HepG2 (cell line): ENCODE measurements at regions of chr1 and their contacts with region 1.

Region 1: DNA sequence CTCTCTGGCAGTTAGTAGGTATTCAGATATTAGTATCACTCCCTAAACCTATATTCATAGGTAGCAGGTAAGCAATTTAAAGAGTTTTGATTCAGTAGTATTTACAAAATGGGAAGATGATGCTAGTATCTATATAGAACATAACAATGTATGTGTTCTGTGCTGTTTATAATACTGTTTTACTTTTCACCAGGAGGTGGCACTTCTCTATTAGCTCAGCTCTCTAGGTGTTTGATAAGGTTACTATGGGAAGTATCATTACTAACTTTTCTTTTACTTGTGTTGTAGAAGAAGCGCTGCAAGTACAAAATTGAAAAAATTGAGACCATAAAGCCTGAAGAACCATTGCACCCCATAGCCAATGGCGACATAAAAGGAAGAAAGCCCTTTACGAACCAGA is 49.4 kb upstream of the FASLG start:
- DNase-seq: peak; percentile 6
- ATAC-seq: peak; percentile 66; the same call in 2 of the 3 replicates
- H3K4me3 ChIP-seq: no peak overlapping the region
- H3K27ac ChIP-seq: no peak overlapping the region
- H3K4me1 ChIP-seq: peaks cover 18% of the 10 kb centered on the region
- H3K27me3 ChIP-seq: no peaks in the 10 kb centered on the region; a peak in 1 of 5 replicates
- CTCF ChIP-seq: no peak
- EP300 ChIP-seq: no peak
- POLR2A ChIP-seq: no peak
- RAD21 ChIP-seq: no peak

Region 2: DNA sequence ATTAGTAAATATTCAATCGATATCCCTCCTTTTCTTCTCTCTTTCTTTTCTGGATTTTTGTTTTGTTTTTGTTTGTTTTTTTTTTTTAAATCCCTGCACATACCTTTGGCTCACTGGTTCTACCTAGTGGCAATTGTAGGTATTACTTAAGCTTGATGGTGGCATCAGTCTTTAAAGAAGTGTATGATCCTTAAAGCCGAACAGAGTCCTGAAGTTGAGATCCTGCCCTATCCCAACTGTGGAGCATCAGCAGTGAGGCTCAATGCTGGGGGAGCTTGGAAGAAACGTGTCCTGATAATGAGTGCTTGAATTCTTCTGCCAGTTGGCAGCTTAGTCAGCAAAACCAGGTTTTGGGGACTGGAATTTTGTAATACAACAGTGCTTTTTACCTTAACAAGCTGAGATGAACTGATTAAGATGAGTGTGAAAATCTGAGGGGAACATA is 110.2 kb after region 1 on chr1:
- CTCF ChIA-PET with region 1: interaction called, 9 read pairs
- POLR2A ChIA-PET with region 1: no interaction called
- in situ Hi-C with region 1: loop called (anchors 10 kb)
- intact Hi-C with region 1: loop called (anchors 1 kb)
- DNase-seq: peak; percentile 44
- ATAC-seq: peak; percentile 74; the same call in 2 of the 3 replicates
- H3K4me3 ChIP-seq: no peak overlapping the region
- H3K27ac ChIP-seq: no peak overlapping the region
- H3K4me1 ChIP-seq: peaks cover 25% of the 10 kb centered on the region
- H3K27me3 ChIP-seq: no peaks in the 10 kb centered on the region
- CTCF ChIP-seq: peak; percentile 67
- EP300 ChIP-seq: no peak
- POLR2A ChIP-seq: no peak
- RAD21 ChIP-seq: peak; percentile 30; the same call in 1 of the 2 replicates